CD8-positive, alpha-beta T cell (primary cell): ENCODE measurements at regions of chr9 and their contacts with region 1.

Region 1: DNA sequence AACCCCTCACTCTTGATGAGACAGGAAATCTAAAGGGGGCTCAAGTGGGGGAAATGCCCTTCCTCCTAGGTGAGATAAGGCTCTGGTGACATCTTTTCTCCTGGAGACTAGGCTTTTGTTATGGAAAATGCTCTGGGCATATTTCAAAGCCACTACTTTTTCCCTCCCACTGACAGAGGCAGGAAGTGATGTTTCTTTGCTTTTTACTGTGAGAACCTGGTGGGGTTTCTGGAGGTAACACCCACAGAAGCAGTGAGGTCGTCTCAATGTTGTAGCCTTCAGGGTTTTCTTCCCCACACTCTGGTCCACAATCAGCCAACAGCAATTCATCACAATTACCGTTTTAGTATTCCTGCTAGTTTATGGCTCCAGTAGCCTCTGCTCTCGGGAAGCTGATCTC is 41.4 kb upstream of the FAM240B start:
- DNase-seq: no peak
- ATAC-seq: no peak
- H3K4me3 ChIP-seq: no peak overlapping the region
- H3K4me3 Mint-ChIP-seq: no peak overlapping the region
- H3K27ac ChIP-seq: no peak overlapping the region
- H3K27ac Mint-ChIP-seq: no peak overlapping the region
- H3K4me1 ChIP-seq: no peaks in the 10 kb centered on the region
- H3K4me1 Mint-ChIP-seq: no peaks in the 10 kb centered on the region
- H3K27me3 ChIP-seq: no peaks in the 10 kb centered on the region
- H3K27me3 Mint-ChIP-seq: peaks cover 7% of the 10 kb centered on the region
- CTCF ChIP-seq: no peak

Region 2: GRCh38 chr9:38689678-38690077 is 71.7 kb before region 1 on chr9:
- CTCF ChIA-PET with region 1: no interaction called
- POLR2A ChIA-PET with region 1: no interaction called
- intact Hi-C with region 1: loop called in 1 of 2 experiments (anchors 10 kb)
- DNase-seq: no peak
- ATAC-seq: no peak
- H3K4me3 ChIP-seq: no peak overlapping the region
- H3K4me3 Mint-ChIP-seq: no peak overlapping the region
- H3K27ac ChIP-seq: no peak overlapping the region
- H3K27ac Mint-ChIP-seq: no peak overlapping the region
- H3K4me1 ChIP-seq: no peaks in the 10 kb centered on the region
- H3K4me1 Mint-ChIP-seq: peaks cover 5% of the 10 kb centered on the region
- H3K27me3 ChIP-seq: no peaks in the 10 kb centered on the region
- H3K27me3 Mint-ChIP-seq: peaks cover 18% of the 10 kb centered on the region
- CTCF ChIP-seq: no peak

Region 3: GRCh38 chr9:38707885-38708637 is 53.3 kb before region 1 on chr9:
- CTCF ChIA-PET with region 1: no interaction called
- POLR2A ChIA-PET with region 1: no interaction called
- intact Hi-C with region 1: loop called in 1 of 2 experiments (anchors 10 kb)
- DNase-seq: peak in 1 of 9 experiments; percentile 3
- ATAC-seq: no peak
- H3K4me3 ChIP-seq: no peak overlapping the region
- H3K4me3 Mint-ChIP-seq: no peak overlapping the region
- H3K27ac ChIP-seq: no peak overlapping the region
- H3K27ac Mint-ChIP-seq: no peak overlapping the region
- H3K4me1 ChIP-seq: no peaks in the 10 kb centered on the region
- H3K4me1 Mint-ChIP-seq: no peaks in the 10 kb centered on the region
- H3K27me3 ChIP-seq: no peaks in the 10 kb centered on the region
- H3K27me3 Mint-ChIP-seq: peaks cover 24% of the 10 kb centered on the region
- CTCF ChIP-seq: no peak